ENCODE measurements at regions of chr4 and their contacts with region 1.

Region 1: GRCh38 chr4:183074296-183074990 is 24.6 kb upstream of the WWC2 start:
- DNase-seq: no peak
- ATAC-seq: no peak
- H3K4me3 ChIP-seq: no peak overlapping the region
- H3K27ac ChIP-seq: no peak overlapping the region
- H3K4me1 ChIP-seq: no peaks in the 10 kb centered on the region
- H3K27me3 ChIP-seq: no peaks in the 10 kb centered on the region
- CTCF ChIP-seq: no peak

Region 2: GRCh38 chr4:182809417-182810102 is 264.9 kb before region 1 on chr4:
- intact Hi-C with region 1: no loop called
- DNase-seq: no peak
- ATAC-seq: no peak
- H3K4me3 ChIP-seq: no peak overlapping the region
- H3K27ac ChIP-seq: no peak overlapping the region
- H3K4me1 ChIP-seq: no peaks in the 10 kb centered on the region
- H3K27me3 ChIP-seq: no peaks in the 10 kb centered on the region
- CTCF ChIP-seq: no peak

Region 3: DNA sequence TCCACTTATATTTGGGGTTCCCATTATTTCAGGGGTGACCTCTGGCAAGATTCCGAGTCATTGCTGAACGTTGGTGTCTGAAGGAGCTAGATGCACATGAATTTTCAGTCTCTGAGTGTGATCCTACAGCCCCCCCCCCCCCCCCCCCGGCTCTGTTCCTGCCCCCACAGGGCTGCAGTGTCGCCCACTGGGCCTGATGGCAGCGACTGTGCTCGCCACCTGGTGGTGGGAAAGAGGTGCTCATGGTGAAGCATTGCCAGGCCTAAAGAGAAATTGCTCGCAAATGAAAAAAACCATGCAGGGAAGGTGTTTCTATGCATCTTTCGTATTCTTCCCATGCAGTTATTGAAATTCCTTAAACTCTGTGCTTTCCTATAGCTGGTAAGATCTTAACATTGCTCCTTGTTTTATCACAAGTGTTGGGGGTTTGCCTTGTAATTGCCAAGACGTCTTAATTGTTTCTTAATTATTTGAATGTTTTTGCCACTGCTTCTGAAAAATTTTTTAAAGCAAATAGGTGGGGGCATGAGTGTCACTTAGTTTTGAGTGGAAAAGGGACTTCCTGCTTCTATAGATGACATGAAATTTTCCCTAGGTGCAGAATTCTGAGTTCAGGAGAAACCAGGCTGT is 182.4 kb after region 1 on chr4:
- intact Hi-C with region 1: loop called (anchors 2 kb)
- DNase-seq: peak; percentile 54 to 69
- ATAC-seq: peak; percentile 69 to 82 (median 70)
- H3K4me3 ChIP-seq: no peak overlapping the region
- H3K27ac ChIP-seq: no peak overlapping the region
- H3K4me1 ChIP-seq: no peaks in the 10 kb centered on the region
- H3K27me3 ChIP-seq: no peaks in the 10 kb centered on the region
- CTCF ChIP-seq: peak; percentile 76

Measured in psoas muscle (tissue), 8 donors.